ENCODE measurements at regions of chr19 and their contacts with region 1.

Region 1: DNA sequence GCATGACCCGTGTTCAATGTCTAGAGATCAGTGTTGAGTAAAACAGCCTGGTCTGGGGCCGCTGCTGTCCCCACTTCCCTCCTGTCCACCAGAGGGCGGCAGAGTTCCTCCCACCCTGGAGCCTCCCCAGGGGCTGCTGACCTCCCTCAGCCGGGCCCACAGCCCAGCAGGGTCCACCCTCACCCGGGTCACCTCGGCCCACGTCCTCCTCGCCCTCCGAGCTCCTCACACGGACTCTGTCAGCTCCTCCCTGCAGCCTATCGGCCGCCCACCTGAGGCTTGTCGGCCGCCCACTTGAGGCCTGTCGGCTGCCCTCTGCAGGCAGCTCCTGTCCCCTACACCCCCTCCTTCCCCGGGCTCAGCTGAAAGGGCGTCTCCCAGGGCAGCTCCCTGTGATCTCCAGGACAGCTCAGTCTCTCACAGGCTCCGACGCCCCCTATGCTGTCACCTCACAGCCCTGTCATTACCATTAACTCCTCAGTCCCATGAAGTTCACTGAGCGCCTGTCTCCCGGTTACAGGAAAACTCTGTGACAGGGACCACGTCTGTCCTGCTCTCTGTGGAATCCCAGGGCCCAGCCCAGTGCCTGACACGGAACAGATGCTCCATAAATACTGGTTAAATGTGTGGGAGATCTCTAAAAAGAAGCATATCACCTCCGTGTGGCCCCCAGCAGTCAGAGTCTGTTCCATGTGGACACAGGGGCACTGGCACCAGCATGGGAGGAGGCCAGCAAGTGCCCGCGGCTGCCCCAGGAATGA is 1.5 kb upstream of the CEACAM5 start:
- DNase-seq: peak; percentile 69
- ATAC-seq: peak; percentile 97
- H3K4me3 ChIP-seq: peak overlapping the region in 1 of 2 experiments; percentile 18; a peak in 1 of 4 replicates
- H3K27ac ChIP-seq: no peak overlapping the region
- H3K4me1 ChIP-seq: peaks cover 0 to 9% of the 10 kb centered on the region in 2 experiments; a peak in 2 of 4 replicates
- H3K27me3 ChIP-seq: peaks cover 47% of the 10 kb centered on the region
- CTCF ChIP-seq: peak; percentile 92 to 100 (median 100)
- POLR2A ChIP-seq: no peak
- RAD21 ChIP-seq: peak; percentile 63

Region 2: GRCh38 chr19:41588497-41589209 is 118.3 kb before region 1 on chr19:
- CTCF ChIA-PET with region 1: no interaction called
- POLR2A ChIA-PET with region 1: no interaction called
- RAD21 ChIA-PET with region 1: no interaction called
- intact Hi-C with region 1: no loop called
- DNase-seq: no peak
- ATAC-seq: no peak
- H3K4me3 ChIP-seq: no peak overlapping the region
- H3K27ac ChIP-seq: no peak overlapping the region
- H3K4me1 ChIP-seq: no peaks in the 10 kb centered on the region
- H3K27me3 ChIP-seq: 0 out of 2 replicates have a peak, but pooled peaks cover 4% of the 10 kb centered on the region
- CTCF ChIP-seq: no peak
- POLR2A ChIP-seq: no peak
- RAD21 ChIP-seq: no peak

Region 3: GRCh38 chr19:41691268-41691970 is 15.5 kb before region 1 on chr19:
- CTCF ChIA-PET with region 1: interaction called, 25 read pairs
- POLR2A ChIA-PET with region 1: no interaction called
- RAD21 ChIA-PET with region 1: no interaction called
- intact Hi-C with region 1: no loop called
- DNase-seq: no peak
- ATAC-seq: peak; percentile 90
- H3K4me3 ChIP-seq: no peak overlapping the region
- H3K27ac ChIP-seq: no peak overlapping the region
- H3K4me1 ChIP-seq: peaks cover 0 to 5% of the 10 kb centered on the region in 2 experiments; a peak in 1 of 4 replicates
- H3K27me3 ChIP-seq: peaks cover 39% of the 10 kb centered on the region
- CTCF ChIP-seq: peak; percentile 54 to 83 (median 83)
- POLR2A ChIP-seq: no peak
- RAD21 ChIP-seq: peak; percentile 44

Region 4: DNA sequence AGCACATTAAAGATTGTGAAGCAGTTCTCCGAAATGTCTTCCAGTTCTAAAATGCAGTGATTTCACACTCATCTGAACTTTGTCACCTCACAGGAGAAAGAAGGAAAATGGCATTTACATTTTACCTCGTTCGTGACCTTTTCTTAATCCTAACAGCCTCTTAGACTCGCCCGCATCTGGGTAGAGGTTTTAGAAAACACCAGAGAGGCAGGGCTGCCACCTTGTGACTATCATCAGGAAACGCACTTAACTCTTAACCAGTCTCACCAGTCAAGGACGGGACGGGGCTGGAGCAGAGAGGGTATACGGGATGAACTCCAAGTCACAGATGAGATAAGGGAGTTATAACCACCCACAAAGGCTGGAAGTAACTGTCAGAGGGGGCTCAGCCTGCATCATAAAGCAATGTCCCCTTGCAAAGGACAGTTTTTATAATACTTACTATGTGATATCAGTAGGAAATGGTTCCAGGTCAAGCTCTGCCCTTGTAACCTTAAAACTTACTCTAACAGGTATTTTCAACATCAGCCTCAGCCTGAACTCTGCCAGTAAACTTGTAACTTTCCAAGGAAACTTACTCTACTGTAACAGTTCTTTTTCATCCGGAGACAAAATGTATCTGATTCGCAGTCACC is 39.8 kb after region 1 on chr19:
- CTCF ChIA-PET with region 1: interaction called, 41 read pairs
- POLR2A ChIA-PET with region 1: no interaction called
- RAD21 ChIA-PET with region 1: no interaction called
- intact Hi-C with region 1: loop called (anchors 1 kb)
- DNase-seq: peak; percentile 47
- ATAC-seq: peak; percentile 97
- H3K4me3 ChIP-seq: no peak overlapping the region
- H3K27ac ChIP-seq: no peak overlapping the region
- H3K4me1 ChIP-seq: no peaks in the 10 kb centered on the region
- H3K27me3 ChIP-seq: peaks cover 62% of the 10 kb centered on the region
- CTCF ChIP-seq: peak; percentile 56 to 84 (median 67); a peak in 5 of 6 replicates
- POLR2A ChIP-seq: no peak
- RAD21 ChIP-seq: peak; percentile 74

Region 5: GRCh38 chr19:41785653-41786052 is 78.7 kb after region 1 on chr19:
- CTCF ChIA-PET with region 1: interaction called, 11 read pairs
- POLR2A ChIA-PET with region 1: no interaction called
- RAD21 ChIA-PET with region 1: no interaction called
- intact Hi-C with region 1: loop called (anchors 5 kb)
- DNase-seq: peak; percentile 80
- ATAC-seq: peak; percentile 98
- H3K4me3 ChIP-seq: no peak overlapping the region
- H3K27ac ChIP-seq: no peak overlapping the region
- H3K4me1 ChIP-seq: peaks cover 0 to 4% of the 10 kb centered on the region in 2 experiments; a peak in 1 of 4 replicates
- H3K27me3 ChIP-seq: peaks cover 52% of the 10 kb centered on the region
- CTCF ChIP-seq: peak; percentile 80 to 96 (median 89)
- POLR2A ChIP-seq: no peak
- RAD21 ChIP-seq: peak; percentile 92

Region 6: GRCh38 chr19:41821003-41821735 is 114.2 kb after region 1 on chr19:
- CTCF ChIA-PET with region 1: interaction called, 15 read pairs
- POLR2A ChIA-PET with region 1: no interaction called
- RAD21 ChIA-PET with region 1: no interaction called
- intact Hi-C with region 1: loop called (anchors 1 kb)
- DNase-seq: peak; percentile 57
- ATAC-seq: peak; percentile 97
- H3K4me3 ChIP-seq: no peak overlapping the region
- H3K27ac ChIP-seq: no peak overlapping the region
- H3K4me1 ChIP-seq: no peaks in the 10 kb centered on the region
- H3K27me3 ChIP-seq: peaks cover 4% of the 10 kb centered on the region
- CTCF ChIP-seq: peak; percentile 79 to 83 (median 83)
- POLR2A ChIP-seq: no peak
- RAD21 ChIP-seq: peak; percentile 81